Pancreas (tissue), 10 donors: ENCODE measurements at regions of chr1 and their contacts with region 1.

Region 1: DNA sequence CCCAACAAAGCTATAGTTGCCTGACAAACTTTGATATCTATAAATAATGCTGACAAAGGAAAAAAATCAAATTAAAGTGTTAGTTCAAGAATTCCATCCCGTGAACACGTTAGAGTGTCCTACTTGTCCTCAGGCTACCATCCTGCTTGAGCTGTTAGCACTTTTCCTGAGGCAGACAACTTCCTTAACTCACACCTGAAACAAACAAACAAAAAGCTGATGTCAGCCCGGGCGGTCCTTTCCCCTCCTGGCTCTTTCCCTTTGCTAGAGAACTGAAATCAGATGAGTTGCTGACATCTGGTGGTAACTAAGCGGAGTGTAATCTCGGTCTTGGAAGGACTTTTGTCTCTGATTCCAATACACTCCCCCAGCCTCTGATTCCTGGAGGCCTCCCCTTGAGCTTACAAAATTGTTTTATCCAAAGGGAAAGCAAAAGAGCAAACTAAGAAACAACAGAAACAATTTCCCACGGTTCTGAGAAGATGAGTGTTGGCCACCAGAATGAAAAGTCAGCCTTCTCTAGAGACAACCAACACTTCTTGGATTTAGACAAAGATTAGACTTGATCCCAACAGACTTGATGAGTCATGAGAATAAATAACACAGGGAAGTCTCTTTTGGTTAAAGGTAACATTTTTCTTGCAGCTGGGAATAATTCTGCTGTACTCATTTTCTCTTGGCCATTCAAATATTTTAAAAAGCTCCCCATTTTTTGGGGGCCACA is 135.4 kb downstream of the PROX1 start:
- DNase-seq: peak; percentile 54 to 78 (median 70)
- ATAC-seq: peak; percentile 93 to 98 (median 96)
- H3K4me3 ChIP-seq: no peak overlapping the region
- H3K27ac ChIP-seq: peak overlapping the region in 2 of 4 donors; percentile 40 to 51
- H3K4me1 ChIP-seq: peaks cover 0 to 4% (median 4%) of the 10 kb centered on the region in 3 donors
- H3K27me3 ChIP-seq: no peaks in the 10 kb centered on the region
- CTCF ChIP-seq: peak in 3 of 4 donors; percentile 26 to 50 (median 40)

Region 2: DNA sequence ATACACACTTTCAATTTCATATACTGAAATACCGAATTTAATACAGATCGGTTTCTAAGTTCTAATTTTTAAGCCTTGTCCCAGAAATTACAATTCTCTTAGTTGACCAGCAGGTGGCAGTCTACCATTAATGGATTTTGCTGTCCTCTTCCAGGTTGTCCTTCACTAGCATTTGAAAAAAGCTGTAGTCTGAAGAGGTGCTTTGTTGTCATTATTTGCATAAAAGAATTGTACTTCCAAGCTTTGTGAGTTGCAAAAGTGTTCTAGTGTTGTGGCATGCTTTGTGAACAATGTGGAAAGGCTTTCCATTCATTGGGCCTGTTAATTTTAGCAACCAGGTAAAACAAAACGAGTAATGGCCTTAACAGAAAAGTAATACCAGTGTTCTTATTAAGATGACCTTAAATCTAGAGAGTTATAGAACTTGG is 878.5 kb before region 1 on chr1:
- intact Hi-C with region 1: loop called in 1 of 3 experiments (anchors 10 kb)
- DNase-seq: peak in 3 of 6 donors; percentile 11 to 32 (median 20)
- ATAC-seq: peak in 3 of 4 donors; percentile 82 to 86 (median 83)
- H3K4me3 ChIP-seq: no peak overlapping the region
- H3K27ac ChIP-seq: peak overlapping the region in 1 of 4 donors; percentile 15
- H3K4me1 ChIP-seq: peaks cover 4 to 16% (median 12%) of the 10 kb centered on the region in 3 donors
- H3K27me3 ChIP-seq: no peaks in the 10 kb centered on the region
- CTCF ChIP-seq: peak; percentile 62 to 79 (median 78)